Activated naive CD4-positive, alpha-beta T cell treated with anti-CD3 and anti-CD28 coated beads, Interleukin-2, amount 10 ng/mL, durations not matched to agents 7 days and 5 days (primary cell): ENCODE measurements at regions of chr2 and their contacts with region 1.

Region 1: GRCh38 chr2:16281451-16282336 is 341.3 kb downstream of the MYCN start:
- DNase-seq: no peak
- H3K4me3 Mint-ChIP-seq: no peak overlapping the region
- H3K27ac Mint-ChIP-seq: no peak overlapping the region
- H3K4me1 Mint-ChIP-seq: no peaks in the 10 kb centered on the region
- H3K27me3 Mint-ChIP-seq: peaks cover 4% of the 10 kb centered on the region

Region 2: DNA sequence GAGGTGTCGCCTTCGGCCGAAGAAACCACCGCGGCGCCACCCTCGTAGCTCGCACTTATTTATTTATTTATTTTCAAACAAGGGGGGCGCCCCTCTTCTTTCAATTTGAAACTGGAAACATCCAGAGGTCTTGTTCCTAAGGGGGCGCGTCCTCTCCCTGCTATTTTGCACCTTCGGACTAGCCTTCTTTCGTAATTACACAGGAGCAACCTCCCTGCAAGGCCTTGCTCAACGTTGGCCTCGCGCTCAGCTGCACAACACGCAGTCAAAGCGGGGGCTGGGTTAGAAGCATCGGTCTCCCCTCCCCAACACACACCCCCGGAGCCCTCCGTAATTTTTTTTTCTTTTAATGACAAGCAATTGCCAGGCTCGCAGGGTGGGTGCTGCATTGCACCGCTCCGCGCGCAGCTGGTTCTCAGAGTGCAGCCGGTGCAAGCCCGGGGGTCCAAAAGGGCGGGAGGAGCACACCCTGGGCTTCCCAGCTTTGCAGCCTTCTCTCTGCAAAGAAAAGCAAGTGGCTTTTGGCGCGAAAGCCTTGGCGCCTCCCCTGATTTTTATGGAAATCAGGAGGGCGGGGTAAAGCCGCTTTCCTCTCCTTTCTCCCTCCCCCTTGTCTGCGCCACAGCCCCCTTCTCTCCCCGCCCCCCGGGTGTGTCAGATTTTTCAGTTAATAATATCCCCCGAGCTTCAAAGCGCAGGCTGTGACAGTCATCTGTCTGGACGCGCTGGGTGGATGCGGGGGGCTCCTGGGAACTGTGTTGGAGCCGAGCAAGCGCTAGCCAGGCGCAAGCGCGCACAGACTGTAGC is 341.6 kb before region 1 on chr2 and contains the start of gene MYCN:
- CTCF ChIA-PET with region 1: interaction called, 28 read pairs
- DNase-seq: peak; percentile 44
- H3K4me3 Mint-ChIP-seq: peak within 1 kb of the TSS; percentile 59
- H3K27ac Mint-ChIP-seq: peak within 1 kb of the TSS; percentile 33
- H3K4me1 Mint-ChIP-seq: peaks cover 29% of the 10 kb centered on the region
- H3K27me3 Mint-ChIP-seq: peaks cover 79% of the 10 kb centered on the region